B cell (primary cell): ENCODE measurements at regions of chr3 and their contacts with region 1.

Region 1: GRCh38 chr3:68893600-68894239 is 38.6 kb downstream of the TAFA4 start:
- DNase-seq: peak; percentile 45
- ATAC-seq: no peak
- H3K4me3 ChIP-seq: no peak overlapping the region
- H3K4me3 Mint-ChIP-seq: no peak overlapping the region
- H3K27ac ChIP-seq: no peak overlapping the region
- H3K27ac Mint-ChIP-seq: no peak overlapping the region
- H3K4me1 ChIP-seq: no peaks in the 10 kb centered on the region
- H3K4me1 Mint-ChIP-seq: no peaks in the 10 kb centered on the region
- H3K27me3 ChIP-seq: no peaks in the 10 kb centered on the region
- H3K27me3 Mint-ChIP-seq: peaks cover 16% of the 10 kb centered on the region
- CTCF ChIP-seq: peak; percentile 77

Region 2: GRCh38 chr3:68876112-68876713 is 17.5 kb before region 1 on chr3:
- CTCF ChIA-PET with region 1: interaction called, 36 read pairs
- POLR2A ChIA-PET with region 1: no interaction called
- intact Hi-C with region 1: no loop called
- DNase-seq: peak; percentile 65
- ATAC-seq: peak; percentile 51
- H3K4me3 ChIP-seq: no peak overlapping the region
- H3K4me3 Mint-ChIP-seq: no peak overlapping the region
- H3K27ac ChIP-seq: no peak overlapping the region
- H3K27ac Mint-ChIP-seq: no peak overlapping the region
- H3K4me1 ChIP-seq: no peaks in the 10 kb centered on the region
- H3K4me1 Mint-ChIP-seq: no peaks in the 10 kb centered on the region
- H3K27me3 ChIP-seq: no peaks in the 10 kb centered on the region
- H3K27me3 Mint-ChIP-seq: peaks cover 35% of the 10 kb centered on the region
- CTCF ChIP-seq: peak; percentile 98